Activated CD4-positive, alpha-beta memory T cell treated with anti-CD3 and anti-CD28 coated beads for 36 hours (primary cell): ENCODE measurements at regions of chrX and their contacts with region 1.

Region 1: DNA sequence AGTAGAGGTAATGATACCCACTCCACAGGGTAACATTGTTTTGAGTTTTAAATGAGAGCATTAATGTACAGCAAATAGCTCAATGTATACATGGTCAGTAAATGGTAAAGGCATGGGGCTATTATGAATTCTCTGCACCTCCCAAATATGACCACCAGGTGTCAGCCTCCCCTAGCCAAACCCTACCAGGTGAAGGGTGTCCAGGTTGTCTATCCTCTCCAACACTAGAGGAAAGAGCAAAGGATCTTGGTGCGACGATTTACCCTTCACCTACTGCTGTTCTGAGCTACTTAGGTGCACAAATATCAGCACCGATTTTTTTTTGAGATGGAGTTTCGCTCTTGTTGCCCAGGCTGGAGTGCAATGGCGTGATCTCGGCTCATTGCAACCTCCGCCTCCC is 26.5 kb upstream of the XIAP start:
- DNase-seq: peak; percentile 73
- H3K4me3 Mint-ChIP-seq: no peak overlapping the region
- H3K27ac Mint-ChIP-seq: no peak overlapping the region
- H3K4me1 Mint-ChIP-seq: peaks cover 12% of the 10 kb centered on the region
- H3K27me3 Mint-ChIP-seq: peaks cover 3% of the 10 kb centered on the region

Region 2: DNA sequence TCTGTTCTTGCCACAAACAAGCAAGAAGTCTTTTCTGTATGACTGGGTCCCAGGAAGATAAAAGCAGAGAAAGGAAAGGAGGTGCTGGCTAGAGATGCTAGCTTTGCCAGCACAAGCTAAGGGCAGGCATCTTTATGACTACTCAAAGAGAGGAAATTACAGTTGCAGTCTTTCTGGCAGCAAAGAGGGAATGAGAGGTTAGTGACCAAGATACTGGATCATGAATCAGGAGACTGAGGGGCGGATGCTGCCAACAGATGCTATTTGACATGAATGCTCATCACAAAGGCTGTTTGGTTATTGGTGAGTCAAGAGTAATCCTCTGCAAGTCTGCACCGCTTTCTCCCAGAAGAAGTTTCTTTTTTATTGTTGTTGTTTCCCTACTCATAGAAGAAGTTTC is 20.9 kb after region 1 on chrX:
- CTCF ChIA-PET with region 1: interaction called, 7 read pairs
- POLR2A ChIA-PET with region 1: no interaction called
- intact Hi-C with region 1: loop called (anchors 1 kb)
- DNase-seq: peak; percentile 40
- H3K4me3 Mint-ChIP-seq: no peak overlapping the region
- H3K27ac Mint-ChIP-seq: peak overlapping the region; percentile 55
- H3K4me1 Mint-ChIP-seq: peaks cover 18% of the 10 kb centered on the region
- H3K27me3 Mint-ChIP-seq: no peaks in the 10 kb centered on the region

Region 3: GRCh38 chrX:123859846-123860838 is 26.8 kb after region 1 on chrX and contains the start of gene XIAP:
- CTCF ChIA-PET with region 1: interaction called, 6 read pairs
- POLR2A ChIA-PET with region 1: interaction called, 3 read pairs
- intact Hi-C with region 1: loop called (anchors 1 kb)
- DNase-seq: peak; percentile 81
- H3K4me3 Mint-ChIP-seq: peak within 1 kb of the TSS; percentile 84
- H3K27ac Mint-ChIP-seq: peak within 1 kb of the TSS; percentile 93
- H3K4me1 Mint-ChIP-seq: peaks cover 19% of the 10 kb centered on the region
- H3K27me3 Mint-ChIP-seq: no peaks in the 10 kb centered on the region
- total RNA-seq, gene XIAP: 33.9 to 36.1 TPM

Region 4: DNA sequence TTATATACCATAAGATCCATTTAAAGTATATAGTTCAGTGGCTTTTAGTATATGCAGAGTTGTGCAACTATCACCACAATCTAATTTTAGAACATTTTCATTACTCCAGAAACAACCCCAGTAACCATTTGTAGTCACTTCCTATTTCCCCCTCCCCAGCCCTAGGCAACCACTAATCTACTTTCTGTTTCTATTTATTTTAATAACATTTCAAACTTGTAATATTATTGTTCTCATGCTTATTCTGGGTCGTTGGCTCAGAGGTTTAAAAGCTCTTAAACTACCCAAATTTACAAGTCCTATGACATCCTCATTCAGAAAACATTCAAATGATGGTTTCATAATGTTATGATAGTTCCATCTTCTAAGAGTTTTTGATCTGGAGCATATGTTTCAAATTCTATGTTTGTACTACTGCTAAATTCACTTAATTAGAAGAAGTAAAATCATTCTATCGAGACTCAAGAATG is 44.9 kb after region 1 on chrX:
- CTCF ChIA-PET with region 1: interaction called, 5 read pairs
- POLR2A ChIA-PET with region 1: interaction called, 3 read pairs
- intact Hi-C with region 1: loop called (anchors 1 kb)
- DNase-seq: no peak
- H3K4me3 Mint-ChIP-seq: no peak overlapping the region
- H3K27ac Mint-ChIP-seq: peak overlapping the region; percentile 58
- H3K4me1 Mint-ChIP-seq: peaks cover 22% of the 10 kb centered on the region
- H3K27me3 Mint-ChIP-seq: no peaks in the 10 kb centered on the region

Region 5: DNA sequence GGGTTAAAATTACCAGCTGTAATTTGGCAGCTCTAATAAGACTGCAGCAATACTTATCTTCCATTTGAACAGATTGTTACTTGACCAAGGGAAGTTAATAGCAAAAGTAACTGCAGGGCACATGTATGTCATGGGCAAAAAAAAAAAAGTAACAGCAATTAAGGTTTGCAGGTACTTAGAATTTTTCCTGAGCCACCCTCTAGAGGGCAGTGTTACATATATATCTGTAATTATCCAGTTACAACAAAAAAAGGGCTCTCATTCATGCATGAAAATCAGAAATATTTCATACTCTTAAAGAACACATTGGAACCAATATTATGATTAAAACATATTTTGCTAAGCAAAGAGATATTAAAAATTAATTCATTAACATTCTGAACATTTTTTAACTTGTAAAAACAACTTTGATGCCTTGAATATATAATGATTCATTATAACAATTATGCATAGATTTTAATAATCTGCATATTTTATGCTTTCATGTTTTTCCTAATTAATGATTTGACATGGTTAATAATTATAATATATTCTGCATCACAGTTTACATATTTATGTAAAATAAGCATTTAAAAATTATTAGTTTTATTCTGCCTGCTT is 51.5 kb after region 1 on chrX:
- CTCF ChIA-PET with region 1: interaction called, 29 read pairs
- POLR2A ChIA-PET with region 1: no interaction called
- intact Hi-C with region 1: loop called (anchors 2 kb)
- DNase-seq: no peak
- H3K4me3 Mint-ChIP-seq: no peak overlapping the region
- H3K27ac Mint-ChIP-seq: no peak overlapping the region
- H3K4me1 Mint-ChIP-seq: peaks cover 8% of the 10 kb centered on the region
- H3K27me3 Mint-ChIP-seq: no peaks in the 10 kb centered on the region

Region 6: GRCh38 chrX:123920105-123920785 is 86.9 kb after region 1 on chrX:
- CTCF ChIA-PET with region 1: no interaction called
- POLR2A ChIA-PET with region 1: no interaction called
- intact Hi-C with region 1: no loop called
- DNase-seq: no peak
- H3K4me3 Mint-ChIP-seq: no peak overlapping the region
- H3K27ac Mint-ChIP-seq: no peak overlapping the region
- H3K4me1 Mint-ChIP-seq: peaks cover 3% of the 10 kb centered on the region
- H3K27me3 Mint-ChIP-seq: no peaks in the 10 kb centered on the region

Region 7: GRCh38 chrX:124018023-124018422 is 184.6 kb after region 1 on chrX:
- CTCF ChIA-PET with region 1: interaction called, 4 read pairs
- POLR2A ChIA-PET with region 1: no interaction called
- intact Hi-C with region 1: loop called (anchors 10 kb)
- DNase-seq: no peak
- H3K4me3 Mint-ChIP-seq: no peak overlapping the region
- H3K27ac Mint-ChIP-seq: no peak overlapping the region
- H3K4me1 Mint-ChIP-seq: peaks cover 23% of the 10 kb centered on the region
- H3K27me3 Mint-ChIP-seq: no peaks in the 10 kb centered on the region

Region 8: GRCh38 chrX:124086411-124086810 is 253.0 kb after region 1 on chrX:
- CTCF ChIA-PET with region 1: no interaction called
- POLR2A ChIA-PET with region 1: interaction called, 3 read pairs
- intact Hi-C with region 1: loop called (anchors 10 kb)
- DNase-seq: peak; percentile 56
- H3K4me3 Mint-ChIP-seq: peak overlapping the region; percentile 7
- H3K27ac Mint-ChIP-seq: peak overlapping the region; percentile 74
- H3K4me1 Mint-ChIP-seq: peaks cover 28% of the 10 kb centered on the region
- H3K27me3 Mint-ChIP-seq: no peaks in the 10 kb centered on the region